ENCODE measurements at regions of chr1 and their contacts with region 1.

Region 1: DNA sequence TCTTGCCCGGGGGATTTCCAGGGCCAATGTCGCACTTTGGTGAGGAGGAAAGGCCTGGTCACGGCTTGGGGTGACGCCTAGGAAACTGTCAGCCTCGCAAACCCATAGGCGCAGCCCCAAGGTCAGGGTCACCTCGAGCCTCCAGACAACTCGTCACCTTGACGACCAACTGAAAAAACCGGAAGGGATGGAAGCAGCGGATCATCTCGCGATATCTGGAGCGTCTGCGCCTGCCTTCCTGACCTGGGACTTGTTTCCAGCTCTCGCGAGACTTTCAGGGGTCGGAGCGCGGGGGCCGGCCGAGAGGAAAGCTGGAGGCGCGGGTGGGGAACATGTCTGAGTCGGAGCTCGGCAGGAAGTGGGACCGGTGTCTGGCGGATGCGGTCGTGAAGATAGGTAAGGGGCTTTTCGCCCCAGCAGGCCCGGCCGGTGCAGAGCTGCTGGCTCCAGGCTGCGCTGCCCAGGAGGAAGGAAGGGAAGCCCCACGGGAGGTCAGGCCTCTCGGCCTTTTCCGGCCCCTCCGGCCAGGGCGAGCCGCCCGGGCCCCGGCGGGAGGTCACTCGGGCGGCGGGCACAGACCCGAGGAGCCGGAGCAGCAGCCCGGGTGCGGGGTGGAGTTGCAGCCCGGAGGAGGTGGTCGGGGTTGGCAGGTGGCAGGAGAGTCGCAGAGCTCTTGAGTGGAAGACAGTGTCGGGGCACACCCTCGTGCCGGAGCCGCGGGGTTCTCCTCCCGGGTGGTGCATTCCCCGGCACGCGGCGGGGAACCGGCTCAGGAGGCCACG is 47.2 kb upstream of the NBL1 start:
- DNase-seq: peak; percentile 99
- ATAC-seq: peak; percentile 92
- H3K4me3 ChIP-seq: peak overlapping the region; percentile 58 to 97 (median 80)
- H3K4me3 Mint-ChIP-seq: peak overlapping the region; percentile 98
- H3K27ac ChIP-seq: peak overlapping the region; percentile 93 to 100
- H3K27ac Mint-ChIP-seq: peak overlapping the region; percentile 99
- H3K4me1 ChIP-seq: peaks cover 22 to 30% of the 10 kb centered on the region in 2 donors
- H3K4me1 Mint-ChIP-seq: peaks cover 42% of the 10 kb centered on the region
- H3K27me3 ChIP-seq: no peaks in the 10 kb centered on the region
- H3K27me3 Mint-ChIP-seq: no peaks in the 10 kb centered on the region
- CTCF ChIP-seq: no peak

Region 2: DNA sequence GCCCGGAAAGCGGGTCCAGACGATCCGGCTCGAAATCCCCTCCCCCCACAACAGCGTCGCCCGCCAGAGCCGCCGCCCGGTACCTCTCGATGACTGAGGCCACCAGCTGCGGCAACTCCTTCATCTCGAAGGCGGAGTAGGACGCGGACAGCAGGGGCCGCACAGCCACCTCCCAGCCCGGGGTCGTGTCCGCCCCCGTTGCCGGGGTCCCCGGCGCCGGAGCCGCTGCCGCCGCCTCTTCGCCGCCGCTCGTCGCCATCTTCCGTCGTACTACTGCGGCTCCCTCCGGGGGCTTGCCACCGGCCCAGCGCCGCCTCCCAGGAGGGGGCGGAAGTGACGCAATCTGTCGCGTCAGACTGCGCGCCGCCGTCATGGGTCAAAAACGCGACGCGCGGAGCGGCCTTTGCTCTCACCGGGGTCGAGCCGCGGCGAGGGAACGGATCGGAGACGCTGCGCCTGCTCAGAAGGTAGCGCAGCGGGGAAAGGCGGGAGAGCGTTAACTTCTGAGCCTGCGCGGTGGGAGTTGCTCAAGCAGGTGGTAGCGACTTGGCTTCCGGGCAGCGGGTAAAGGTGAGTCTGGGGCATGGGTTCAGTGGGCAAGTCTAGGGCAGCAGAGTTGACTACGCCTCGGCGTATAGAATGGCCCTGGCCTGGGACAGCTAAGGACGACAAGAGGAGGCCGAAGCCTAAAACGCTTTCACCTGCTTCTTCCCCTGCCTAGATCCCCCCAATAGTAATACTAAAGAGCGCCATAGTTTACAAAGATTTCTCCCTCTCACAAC is 386.7 kb before region 1 on chr1 and contains the start of gene UBR4:
- CTCF ChIA-PET with region 1: no interaction called
- POLR2A ChIA-PET with region 1: no interaction called
- intact Hi-C with region 1: loop called (anchors 1 kb)
- DNase-seq: peak; percentile 98
- ATAC-seq: peak; percentile 87
- H3K4me3 ChIP-seq: peak within 1 kb of the TSS; percentile 79 to 93 (median 88)
- H3K4me3 Mint-ChIP-seq: peak within 1 kb of the TSS; percentile 93
- H3K27ac ChIP-seq: peak within 1 kb of the TSS; percentile 89 to 94
- H3K27ac Mint-ChIP-seq: peak within 1 kb of the TSS; percentile 94
- H3K4me1 ChIP-seq: peaks cover 32 to 37% of the 10 kb centered on the region in 2 donors
- H3K4me1 Mint-ChIP-seq: peaks cover 58% of the 10 kb centered on the region
- H3K27me3 ChIP-seq: no peaks in the 10 kb centered on the region
- H3K27me3 Mint-ChIP-seq: no peaks in the 10 kb centered on the region
- CTCF ChIP-seq: no peak
- total RNA-seq, gene UBR4: 190 and 205 TPM in 2 replicates

Region 3: DNA sequence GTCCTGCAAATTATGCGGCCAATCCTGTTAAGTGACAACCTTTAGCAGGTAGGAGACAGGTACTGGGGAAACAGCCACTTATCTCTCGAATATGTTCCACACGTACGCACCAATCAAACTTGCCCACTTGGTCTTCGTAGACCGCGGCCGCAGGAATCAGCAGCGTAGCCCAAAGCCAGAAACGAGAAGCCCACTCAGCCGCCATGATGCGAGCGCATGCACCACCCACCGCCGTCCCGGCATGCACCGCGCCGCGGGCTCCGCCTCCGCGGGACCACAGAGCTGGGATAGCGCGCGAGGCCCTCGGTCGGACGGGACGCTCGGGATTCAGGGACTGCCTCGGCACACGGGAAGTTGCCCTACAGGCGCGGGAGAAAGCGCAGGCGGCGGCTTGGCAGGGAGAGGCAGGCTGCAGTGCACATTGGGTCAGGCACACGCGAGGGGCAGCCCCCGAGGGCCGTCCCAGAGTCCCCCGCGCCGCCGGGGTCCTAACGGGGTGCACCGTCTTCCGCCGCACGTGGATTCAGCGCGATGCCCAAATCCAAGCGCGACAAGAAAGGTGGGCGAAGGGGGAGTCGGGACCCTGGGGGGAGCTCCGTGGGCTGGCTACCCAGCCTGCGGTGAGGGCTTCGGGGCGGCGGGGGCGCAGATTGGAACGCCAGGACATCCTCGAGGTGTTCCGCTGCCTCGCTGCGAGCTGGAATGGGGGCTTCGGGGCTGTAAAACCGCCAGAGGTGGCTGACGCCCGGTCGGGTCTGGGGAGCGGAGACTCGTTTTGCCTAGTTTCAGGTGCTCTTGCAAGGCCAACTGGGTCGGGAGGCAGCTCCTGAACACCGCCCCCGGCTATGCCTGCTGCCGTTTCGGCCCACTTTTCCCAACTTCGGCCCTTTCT is 345.4 kb before region 1 on chr1 and contains the starts of genes EMC1 and MRTO4:
- CTCF ChIA-PET with region 1: no interaction called
- POLR2A ChIA-PET with region 1: no interaction called
- intact Hi-C with region 1: loop called (anchors 2 kb)
- DNase-seq: peak; percentile 93
- ATAC-seq: peak; percentile 94
- H3K4me3 ChIP-seq: peak within 1 kb of the TSS; percentile 46 to 82 (median 79)
- H3K4me3 Mint-ChIP-seq: peak within 1 kb of the TSS; percentile 98
- H3K27ac ChIP-seq: peak within 1 kb of the TSS; percentile 90 to 95
- H3K27ac Mint-ChIP-seq: peak within 1 kb of the TSS; percentile 97
- H3K4me1 ChIP-seq: peaks cover 21 to 37% of the 10 kb centered on the region in 2 donors
- H3K4me1 Mint-ChIP-seq: peaks cover 30% of the 10 kb centered on the region
- H3K27me3 ChIP-seq: no peaks in the 10 kb centered on the region
- H3K27me3 Mint-ChIP-seq: no peaks in the 10 kb centered on the region
- CTCF ChIP-seq: no peak
- total RNA-seq, gene EMC1: 43.3 and 45.5 TPM in 2 replicates
- total RNA-seq, gene MRTO4: 20.2 and 28.1 TPM in 2 replicates

Region 4: GRCh38 chr1:19504796-19505692 is 91.9 kb before region 1 on chr1:
- CTCF ChIA-PET with region 1: interaction called, 3 read pairs
- POLR2A ChIA-PET with region 1: no interaction called
- intact Hi-C with region 1: loop called (anchors 5 kb)
- DNase-seq: no peak
- ATAC-seq: peak; percentile 19
- H3K4me3 ChIP-seq: peak overlapping the region in 1 of 5 experiments; percentile 1
- H3K4me3 Mint-ChIP-seq: peak overlapping the region; percentile 64
- H3K27ac ChIP-seq: peak overlapping the region; percentile 19 to 32
- H3K27ac Mint-ChIP-seq: peak overlapping the region; percentile 73
- H3K4me1 ChIP-seq: peaks cover 26 to 31% of the 10 kb centered on the region in 2 donors
- H3K4me1 Mint-ChIP-seq: peaks cover 45% of the 10 kb centered on the region
- H3K27me3 ChIP-seq: no peaks in the 10 kb centered on the region
- H3K27me3 Mint-ChIP-seq: no peaks in the 10 kb centered on the region
- CTCF ChIP-seq: no peak

Region 5: DNA sequence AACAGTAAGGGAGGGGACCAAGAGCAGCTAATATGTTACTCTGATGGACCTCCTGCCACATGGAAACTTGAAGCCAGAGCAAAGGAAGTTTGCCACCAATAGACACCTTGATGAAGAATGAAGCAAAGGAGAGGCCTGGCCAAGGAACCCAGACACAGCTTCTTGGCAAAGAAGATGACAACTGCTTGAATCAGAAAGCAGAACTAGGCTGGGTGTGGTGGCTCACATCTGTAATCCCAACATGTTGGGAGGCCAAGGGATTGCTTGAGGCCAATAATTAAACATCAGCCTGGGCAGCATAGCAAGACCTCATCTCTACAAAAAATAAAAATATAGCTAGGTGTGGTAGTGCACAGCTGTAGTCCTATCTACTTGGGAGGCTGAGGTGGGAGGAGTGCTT is 79.9 kb before region 1 on chr1:
- CTCF ChIA-PET with region 1: no interaction called
- POLR2A ChIA-PET with region 1: no interaction called
- intact Hi-C with region 1: no loop called
- DNase-seq: peak; percentile 26
- ATAC-seq: no peak
- H3K4me3 ChIP-seq: no peak overlapping the region
- H3K4me3 Mint-ChIP-seq: peak overlapping the region; percentile 64
- H3K27ac ChIP-seq: peak overlapping the region in 1 of 2 donors; percentile 2
- H3K27ac Mint-ChIP-seq: peak overlapping the region; percentile 72
- H3K4me1 ChIP-seq: peaks cover 15 to 23% of the 10 kb centered on the region in 2 donors
- H3K4me1 Mint-ChIP-seq: peaks cover 33% of the 10 kb centered on the region
- H3K27me3 ChIP-seq: no peaks in the 10 kb centered on the region
- H3K27me3 Mint-ChIP-seq: no peaks in the 10 kb centered on the region
- CTCF ChIP-seq: no peak

Measured in B cell (primary cell).